BJ (cell line): ENCODE measurements at regions of chr19 and their contacts with region 1.

Region 1: DNA sequence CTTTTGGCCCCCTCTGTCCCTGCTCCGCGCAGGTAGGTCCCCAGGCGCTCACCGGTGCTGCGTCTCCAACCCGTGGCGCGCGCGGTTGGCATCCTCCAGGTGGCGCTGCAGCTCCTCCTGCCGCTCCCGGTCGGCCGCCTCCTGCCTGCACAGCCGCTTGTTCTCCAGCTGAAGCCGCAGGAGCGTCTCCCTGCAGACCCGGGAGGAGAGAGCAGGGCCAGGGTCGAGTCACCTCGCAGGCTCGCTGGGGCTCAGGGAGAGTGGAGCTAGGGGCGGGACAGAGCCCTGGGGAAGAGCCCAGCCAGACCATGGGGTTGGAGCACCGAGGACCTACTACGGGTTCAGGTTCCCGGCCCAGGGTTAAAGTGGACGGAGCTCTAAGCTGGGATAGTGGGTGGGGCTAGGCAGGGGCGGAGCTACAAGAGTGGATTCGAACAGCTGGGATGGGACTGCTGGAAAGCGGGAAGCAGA is 9.3 kb downstream of the HOOK2 start:
- DNase-seq: no peak
- H3K4me3 ChIP-seq: peak overlapping the region; percentile 49
- H3K27me3 ChIP-seq: no peaks in the 10 kb centered on the region
- CTCF ChIP-seq: peak; percentile 88

Region 2: GRCh38 chr19:12749938-12750521 is 16.1 kb before region 1 on chr19:
- CTCF ChIA-PET with region 1: interaction called, 62 read pairs
- POLR2A ChIA-PET with region 1: no interaction called
- DNase-seq: no peak
- H3K4me3 ChIP-seq: no peak overlapping the region
- H3K27me3 ChIP-seq: peaks cover 7% of the 10 kb centered on the region
- CTCF ChIP-seq: no peak

Region 3: DNA sequence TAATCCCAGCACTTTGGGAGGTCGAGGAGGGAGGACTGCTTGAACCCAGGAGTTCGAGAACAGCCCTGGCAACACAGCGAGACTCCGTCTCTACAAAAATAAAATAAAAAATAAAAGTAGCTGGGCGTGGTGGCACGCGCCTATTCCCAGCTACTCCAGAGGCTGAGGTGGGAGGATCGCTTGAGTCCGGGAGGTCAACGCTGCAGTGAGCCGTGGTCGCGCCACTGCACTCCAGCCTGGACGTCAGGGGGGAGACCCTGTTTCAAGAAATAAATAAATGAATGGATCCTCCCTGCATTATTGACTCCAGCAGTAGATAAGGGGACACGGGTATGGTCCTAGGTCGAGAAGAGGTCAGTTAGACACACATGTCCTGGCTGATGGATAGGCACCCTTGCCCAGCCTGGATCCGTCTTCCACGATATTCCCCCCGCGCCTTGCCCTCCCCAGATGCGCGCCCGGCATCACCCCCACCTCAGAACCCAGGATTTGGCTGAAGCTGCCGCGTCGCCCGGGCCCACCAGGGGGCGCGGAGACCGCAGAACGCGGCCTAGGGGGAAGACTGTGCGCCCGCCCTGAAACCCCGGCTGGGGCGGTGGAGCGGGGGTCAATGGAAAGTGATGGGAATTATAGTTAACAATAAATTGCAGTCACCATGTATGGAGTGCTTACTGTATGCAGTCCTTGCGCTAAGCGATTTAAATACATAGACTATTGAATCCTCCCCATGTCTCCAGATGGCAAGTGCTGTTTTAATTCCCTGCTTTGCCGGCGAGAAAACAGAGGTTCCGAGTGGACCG is 11.3 kb after region 1 on chr19:
- CTCF ChIA-PET with region 1: interaction called, 66 read pairs
- POLR2A ChIA-PET with region 1: no interaction called
- DNase-seq: no peak
- H3K4me3 ChIP-seq: peak overlapping the region; percentile 65
- H3K27me3 ChIP-seq: no peaks in the 10 kb centered on the region
- CTCF ChIP-seq: peak; percentile 99

Region 4: DNA sequence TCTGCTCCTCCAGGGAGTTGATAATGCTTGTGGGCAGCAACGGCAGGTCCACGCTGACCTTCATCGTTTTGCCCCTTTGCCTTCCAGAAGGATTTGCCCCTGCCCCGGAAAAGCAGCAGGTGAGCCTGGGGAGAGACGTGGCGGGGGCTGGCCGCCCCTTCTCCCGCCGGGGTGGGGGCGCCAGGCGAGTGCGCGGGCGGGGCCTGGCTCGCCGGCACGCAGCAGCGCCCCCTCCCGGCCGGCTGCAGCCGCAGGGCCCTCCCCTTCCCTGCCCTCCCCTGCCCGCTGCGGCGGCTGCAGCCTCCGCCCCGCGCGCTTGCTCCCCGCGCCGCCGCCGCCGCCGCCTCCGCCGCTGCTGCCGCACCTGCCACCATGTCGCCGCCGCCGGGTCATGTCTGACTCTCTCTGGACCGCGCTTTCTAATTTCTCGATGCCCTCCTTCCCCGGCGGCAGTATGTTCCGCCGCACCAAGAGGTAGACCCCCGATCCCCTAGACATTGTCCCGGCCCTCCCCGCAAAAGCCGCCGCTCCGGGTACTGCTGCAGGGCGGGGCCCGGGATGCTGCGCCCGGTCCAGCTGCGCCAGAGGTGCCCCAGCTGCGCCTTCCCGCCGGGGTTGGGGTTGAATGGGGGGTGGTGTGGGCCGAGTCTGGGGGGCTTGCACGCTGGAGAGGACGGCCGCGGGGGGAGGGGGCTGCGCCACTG is 72.2 kb after region 1 on chr19 and contains the start of gene MAST1:
- CTCF ChIA-PET with region 1: interaction called, 355 read pairs
- POLR2A ChIA-PET with region 1: no interaction called
- DNase-seq: no peak
- H3K4me3 ChIP-seq: no peak within 1 kb of the TSS
- H3K27me3 ChIP-seq: peaks cover 42% of the 10 kb centered on the region
- CTCF ChIP-seq: no peak; the same call in 1 of the 2 replicates
- polyA plus RNA-seq, gene MAST1: 0.25 TPM in 1 of 2 replicates, not detected in the other